ACHN (cell line): ENCODE measurements at regions of chr4 and their contacts with region 1.

Region 1: DNA sequence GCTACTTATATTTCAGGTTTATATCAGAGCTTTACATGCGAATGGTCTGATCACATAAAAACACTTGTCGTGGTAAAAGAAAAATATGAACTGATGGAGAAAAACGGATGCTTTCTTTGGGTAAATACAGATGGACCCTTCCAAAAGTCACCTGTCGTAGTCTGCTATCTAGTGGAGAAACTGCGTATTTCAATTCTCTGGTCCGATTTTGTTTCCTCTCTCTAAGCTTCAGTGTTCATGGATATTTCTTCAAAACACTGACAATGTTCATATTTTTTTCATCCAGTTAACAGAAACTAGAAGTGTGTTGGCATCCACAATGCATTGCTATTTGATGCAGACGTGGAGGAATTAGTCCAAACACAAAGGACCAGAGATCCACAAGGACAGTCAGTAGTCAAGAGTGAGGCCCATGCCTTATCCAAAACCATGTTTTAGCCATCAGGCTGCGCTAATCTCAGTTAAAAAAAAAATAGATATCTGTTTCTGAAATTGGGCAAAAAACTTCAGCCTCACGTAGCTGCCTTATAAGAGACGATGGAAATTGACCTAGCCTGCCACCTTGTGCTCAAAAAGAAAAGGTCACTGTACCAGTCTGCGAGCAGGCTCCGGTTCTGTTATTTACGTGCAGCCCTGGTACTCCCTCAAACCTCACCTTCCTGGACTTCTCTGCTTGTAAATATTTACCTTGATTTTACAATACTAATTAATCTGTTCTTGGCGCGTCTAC is 16.0 kb downstream of the MEPE start:
- DNase-seq: peak; percentile 59

Region 2: GRCh38 chr4:87270144-87270543 is 578.6 kb before region 1 on chr4:
- in situ Hi-C with region 1: no loop called
- DNase-seq: peak; percentile 51

Region 3: GRCh38 chr4:87476934-87477333 is 371.9 kb before region 1 on chr4:
- in situ Hi-C with region 1: no loop called
- DNase-seq: no peak

Region 4: GRCh38 chr4:87543835-87544461 is 304.8 kb before region 1 on chr4:
- in situ Hi-C with region 1: loop called (anchors 25 kb)
- DNase-seq: peak; percentile 45

Region 5: GRCh38 chr4:87961993-87962392 is 113.2 kb after region 1 on chr4:
- in situ Hi-C with region 1: loop called (anchors 10 kb)
- DNase-seq: peak; percentile 69